GM12878 (cell line): ENCODE measurements at regions of chr3 and their contacts with region 1.

Region 1: DNA sequence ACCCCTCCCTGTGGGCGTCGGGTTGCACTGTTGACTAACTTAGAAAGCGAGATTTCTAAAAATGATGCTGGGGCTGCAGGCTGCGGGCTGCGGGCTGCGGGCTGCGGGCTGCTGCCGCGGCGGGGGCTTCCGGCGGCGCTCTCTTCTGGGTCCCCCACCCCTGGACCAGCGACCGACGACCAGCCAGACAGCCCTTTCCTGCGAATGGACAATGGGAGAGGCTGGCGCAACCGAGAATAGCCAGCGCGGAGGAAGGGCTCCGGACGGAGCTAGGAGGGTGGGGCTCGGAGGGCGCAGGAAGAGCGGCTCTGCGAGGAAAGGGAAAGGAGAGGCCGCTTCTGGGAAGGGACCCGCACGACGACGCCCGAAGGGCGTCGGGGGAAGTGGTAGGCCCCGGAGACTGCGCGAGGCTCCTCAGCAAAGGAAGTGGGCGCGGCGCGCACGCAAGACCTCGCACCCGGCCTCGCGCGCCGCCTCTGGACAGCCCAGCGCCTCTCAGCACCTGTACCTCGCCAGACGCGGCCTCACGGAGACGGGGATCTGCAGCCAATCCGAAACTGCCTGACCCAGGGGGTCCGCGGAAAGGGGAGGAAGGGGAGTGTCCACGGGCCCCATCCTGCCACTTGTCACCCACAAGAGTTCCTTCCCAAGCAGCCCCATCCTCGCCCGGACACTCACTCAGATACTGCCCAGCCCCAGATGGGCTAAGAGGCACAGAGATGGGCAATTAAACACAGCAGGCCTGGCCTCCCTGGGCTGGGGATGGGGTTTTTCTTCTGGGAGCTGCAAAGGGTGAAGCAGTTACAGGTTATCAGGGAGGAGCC is 70.7 kb downstream of the SLC12A8 start:
- DNase-seq: no peak
- ATAC-seq: peak; percentile 88
- H3K4me3 ChIP-seq: peak overlapping the region; percentile 60; the same call in 1 of the 2 replicates
- H3K27ac ChIP-seq: peak overlapping the region; percentile 95
- H3K4me1 ChIP-seq: peaks cover 92% of the 10 kb centered on the region
- H3K27me3 ChIP-seq: no peaks in the 10 kb centered on the region
- CTCF ChIP-seq: peak; percentile 47 to 54 (median 54)
- EP300 ChIP-seq: peak; percentile 88; a peak in 3 of 4 replicates
- POLR2A ChIP-seq: peak; percentile 60; the same call in 1 of the 2 replicates
- RAD21 ChIP-seq: peak; percentile 46

Region 2: GRCh38 chr3:125119752-125120378 is 21.9 kb before region 1 on chr3:
- CTCF ChIA-PET with region 1: interaction called, 24 read pairs
- POLR2A ChIA-PET with region 1: interaction called, 15 read pairs
- RAD21 ChIA-PET with region 1: interaction called, 106 read pairs
- SMC1A ChIA-PET with region 1: interaction called, 91 read pairs
- in situ Hi-C with region 1: no loop called
- intact Hi-C with region 1: loop called (anchors 2 kb)
- DNase-seq: peak; percentile 87
- ATAC-seq: peak; percentile 80
- H3K4me3 ChIP-seq: peak overlapping the region; percentile 60
- H3K27ac ChIP-seq: peak overlapping the region; percentile 97
- H3K4me1 ChIP-seq: peaks cover 76% of the 10 kb centered on the region
- H3K27me3 ChIP-seq: no peaks in the 10 kb centered on the region
- CTCF ChIP-seq: no peak
- EP300 ChIP-seq: peak; percentile 18 to 68; a peak in 1 of 4 replicates
- POLR2A ChIP-seq: no peak; the same call in 1 of the 2 replicates
- RAD21 ChIP-seq: no peak

Region 3: GRCh38 chr3:125129512-125129962 is 12.3 kb before region 1 on chr3:
- CTCF ChIA-PET with region 1: interaction called, 4 read pairs
- POLR2A ChIA-PET with region 1: interaction called, 7 read pairs
- RAD21 ChIA-PET with region 1: interaction called, 5 read pairs
- SMC1A ChIA-PET with region 1: interaction called, 16 read pairs
- in situ Hi-C with region 1: no loop called
- intact Hi-C with region 1: no loop called
- DNase-seq: no peak
- ATAC-seq: no peak
- H3K4me3 ChIP-seq: no peak overlapping the region
- H3K27ac ChIP-seq: no peak overlapping the region; the same call in 1 of the 2 replicates
- H3K4me1 ChIP-seq: peaks cover 54% of the 10 kb centered on the region
- H3K27me3 ChIP-seq: no peaks in the 10 kb centered on the region
- CTCF ChIP-seq: no peak
- EP300 ChIP-seq: no peak
- POLR2A ChIP-seq: no peak
- RAD21 ChIP-seq: no peak